PC-9 (cell line): ENCODE measurements at regions of chr19 and their contacts with region 1.

Region 1: GRCh38 chr19:13366529-13367143 is 139.6 kb downstream of the CACNA1A start:
- DNase-seq: peak in 1 of 2 experiments; percentile 16
- H3K4me3 ChIP-seq: no peak overlapping the region
- H3K27ac ChIP-seq: no peak overlapping the region
- H3K4me1 ChIP-seq: no peaks in the 10 kb centered on the region
- H3K27me3 ChIP-seq: peaks cover 63% of the 10 kb centered on the region
- CTCF ChIP-seq: peak; percentile 61

Region 2: DNA sequence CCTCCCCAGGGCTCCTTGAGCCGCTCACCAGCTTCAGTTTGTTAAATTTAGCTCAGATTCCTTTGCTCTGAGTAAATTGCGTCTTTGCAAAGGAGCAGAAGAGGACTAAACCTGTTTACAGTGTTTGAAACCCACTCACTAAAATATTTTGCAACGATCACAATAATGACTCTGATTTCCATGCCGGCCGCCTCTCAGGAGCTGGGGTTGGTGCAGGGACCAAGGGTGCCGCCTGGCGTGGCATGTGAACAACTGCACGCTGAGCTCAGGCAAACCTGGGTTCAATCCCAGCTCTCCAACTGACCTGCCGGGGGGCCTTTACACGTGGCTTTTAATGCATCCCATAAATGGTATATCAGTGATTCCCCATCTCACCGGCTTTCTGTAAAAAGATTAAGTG is 208.3 kb after region 1 on chr19:
- CTCF ChIA-PET with region 1: no interaction called
- POLR2A ChIA-PET with region 1: no interaction called
- intact Hi-C with region 1: loop called (anchors 5 kb)
- DNase-seq: peak in 1 of 2 experiments; percentile 6
- H3K4me3 ChIP-seq: no peak overlapping the region
- H3K27ac ChIP-seq: no peak overlapping the region
- H3K4me1 ChIP-seq: no peaks in the 10 kb centered on the region
- H3K27me3 ChIP-seq: peaks cover 47% of the 10 kb centered on the region
- CTCF ChIP-seq: peak; percentile 59